Posterior vena cava (tissue), 2 donors: ENCODE measurements at regions of chr3 and their contacts with region 1.

Region 1: GRCh38 chr3:186406669-186407635 is 44.9 kb upstream of the DGKG start:
- DNase-seq: no peak

Region 2: GRCh38 chr3:184543843-184544512 is 1863.0 kb before region 1 on chr3:
- intact Hi-C with region 1: loop called in 1 of 2 experiments (anchors 5 kb)
- DNase-seq: peak; percentile 83

Region 3: GRCh38 chr3:186442162-186442561 is 35.2 kb after region 1 on chr3:
- intact Hi-C with region 1: loop called in 1 of 2 experiments (anchors 1 kb)
- DNase-seq: no peak